HEK293 (cell line): ENCODE measurements at regions of chr17 and their contacts with region 1.

Region 1: GRCh38 chr17:44170499-44171201 is at the start of gene ASB16:
- H3K4me3 ChIP-seq: no peak within 1 kb of the TSS
- H3K27ac ChIP-seq: no peak within 1 kb of the TSS
- H3K4me1 ChIP-seq: peaks cover 6% of the 10 kb centered on the region; the same call in 1 of the 2 replicates
- CTCF ChIP-seq: no peak

Region 2: DNA sequence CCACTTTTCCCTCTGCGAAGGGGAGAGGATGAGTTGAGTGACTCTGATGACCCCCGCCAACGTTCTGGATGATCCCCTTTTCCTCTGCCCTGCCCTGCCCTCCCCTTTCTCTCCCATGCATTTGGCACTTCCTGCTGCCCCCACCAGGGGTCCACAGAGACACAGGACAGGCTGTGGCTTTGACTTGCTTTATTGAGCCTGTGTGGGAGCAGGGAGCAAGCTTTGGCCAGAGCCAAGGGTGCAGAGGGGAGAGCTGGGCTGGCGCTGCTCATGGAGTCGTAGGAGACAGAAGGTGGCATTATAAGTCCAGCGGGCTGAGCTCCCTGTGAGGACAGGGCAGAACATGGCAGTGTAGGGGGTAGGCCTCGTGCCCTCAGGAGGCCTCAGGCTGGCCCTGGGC is 230.0 kb before region 1 on chr17:
- CTCF ChIA-PET with region 1: interaction called, 24 read pairs
- POLR2A ChIA-PET with region 1: interaction called, 4 read pairs
- H3K4me3 ChIP-seq: no peak overlapping the region
- H3K27ac ChIP-seq: no peak overlapping the region
- H3K4me1 ChIP-seq: no peaks in the 10 kb centered on the region; the same call in 1 of the 2 replicates
- CTCF ChIP-seq: peak; percentile 68

Region 3: GRCh38 chr17:44044067-44044466 is 126.6 kb before region 1 on chr17:
- CTCF ChIA-PET with region 1: interaction called, 26 read pairs
- POLR2A ChIA-PET with region 1: no interaction called
- H3K4me3 ChIP-seq: no peak overlapping the region
- H3K27ac ChIP-seq: no peak overlapping the region
- H3K4me1 ChIP-seq: peaks cover 11% of the 10 kb centered on the region
- CTCF ChIP-seq: no peak

Region 4: GRCh38 chr17:44110823-44111633 is 59.6 kb before region 1 on chr17:
- CTCF ChIA-PET with region 1: interaction called, 13 read pairs
- POLR2A ChIA-PET with region 1: interaction called, 9 read pairs
- H3K4me3 ChIP-seq: no peak overlapping the region
- H3K27ac ChIP-seq: peak overlapping the region; percentile 54; the same call in 1 of the 2 replicates
- H3K4me1 ChIP-seq: peaks cover 24% of the 10 kb centered on the region
- CTCF ChIP-seq: no peak

Region 5: DNA sequence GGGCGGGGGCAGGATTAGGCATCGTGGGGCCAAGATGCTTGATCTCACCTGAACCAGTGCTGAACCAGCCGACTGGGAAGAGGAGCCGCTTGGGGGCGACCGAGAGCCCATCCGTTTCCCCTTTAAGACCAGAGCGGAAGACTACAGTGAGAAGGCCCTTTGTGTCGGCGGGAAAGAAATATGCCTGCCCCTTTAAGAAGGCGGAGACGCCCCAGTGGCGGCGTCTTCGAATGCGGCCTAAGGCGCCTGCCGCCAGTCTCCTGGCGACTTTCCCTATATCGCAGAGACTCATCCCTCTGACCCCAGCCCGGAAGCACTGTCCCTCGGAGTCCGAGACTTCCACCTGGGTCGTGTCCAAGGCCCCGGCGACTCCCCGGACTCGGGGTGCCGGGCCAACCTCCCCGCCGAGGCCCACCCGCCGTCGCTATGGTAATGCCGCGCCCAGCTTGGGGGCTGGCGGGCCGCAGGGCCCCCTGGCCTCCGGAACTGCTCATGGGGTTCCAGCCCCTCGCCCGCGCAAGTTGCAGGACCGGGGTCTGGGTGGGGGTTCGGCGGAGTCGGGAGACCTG is 28.8 kb before region 1 on chr17 and contains the start of gene HROB:
- CTCF ChIA-PET with region 1: interaction called, 20 read pairs
- POLR2A ChIA-PET with region 1: interaction called, 14 read pairs
- H3K4me3 ChIP-seq: peak within 1 kb of the TSS; percentile 98
- H3K27ac ChIP-seq: peak within 1 kb of the TSS; percentile 93
- H3K4me1 ChIP-seq: peaks cover 11% of the 10 kb centered on the region
- CTCF ChIP-seq: peak; percentile 98

Region 6: GRCh38 chr17:44159519-44160210 is 11.0 kb before region 1 on chr17:
- CTCF ChIA-PET with region 1: interaction called, 21 read pairs
- POLR2A ChIA-PET with region 1: interaction called, 5 read pairs
- H3K4me3 ChIP-seq: no peak overlapping the region
- H3K27ac ChIP-seq: no peak overlapping the region
- H3K4me1 ChIP-seq: no peaks in the 10 kb centered on the region
- CTCF ChIP-seq: no peak